ENCODE measurements at regions of chr2 and their contacts with region 1.

Region 1: GRCh38 chr2:74685408-74685807 is 31.4 kb downstream of the SEMA4F start:
- DNase-seq: no peak

Region 2: GRCh38 chr2:74286725-74287124 is 398.7 kb before region 1 on chr2:
- in situ Hi-C with region 1: no loop called
- DNase-seq: no peak

Region 3: DNA sequence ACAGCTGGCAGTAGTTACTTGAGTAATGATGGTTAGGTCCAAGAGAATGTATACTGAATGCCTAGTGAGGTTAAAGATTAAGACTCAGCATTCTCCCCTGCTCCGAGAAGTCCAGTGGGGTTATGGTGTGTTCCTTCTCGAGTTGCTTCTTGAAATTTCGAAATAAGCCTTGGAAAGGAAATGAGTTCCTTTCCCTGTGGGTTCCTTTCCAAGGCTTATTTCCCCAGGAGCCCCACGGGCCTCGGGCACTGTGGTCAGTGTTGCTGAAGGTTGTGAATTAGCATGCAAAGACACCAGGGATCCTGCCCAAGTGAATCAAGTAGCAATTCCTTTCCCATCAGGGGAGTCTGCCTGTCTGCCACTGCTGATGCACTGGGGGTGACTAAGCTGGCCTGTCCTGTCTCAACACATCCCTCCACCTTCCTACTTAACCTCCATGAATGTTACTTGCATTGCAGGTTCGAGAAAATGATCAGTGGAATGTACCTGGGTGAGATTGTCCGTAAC is 202.1 kb after region 1 on chr2:
- in situ Hi-C with region 1: loop called (anchors 10 kb)
- DNase-seq: no peak

Measured in KBM-7 (cell line).